HepG2 (cell line): ENCODE measurements at regions of chr6 and their contacts with region 1.

Region 1: DNA sequence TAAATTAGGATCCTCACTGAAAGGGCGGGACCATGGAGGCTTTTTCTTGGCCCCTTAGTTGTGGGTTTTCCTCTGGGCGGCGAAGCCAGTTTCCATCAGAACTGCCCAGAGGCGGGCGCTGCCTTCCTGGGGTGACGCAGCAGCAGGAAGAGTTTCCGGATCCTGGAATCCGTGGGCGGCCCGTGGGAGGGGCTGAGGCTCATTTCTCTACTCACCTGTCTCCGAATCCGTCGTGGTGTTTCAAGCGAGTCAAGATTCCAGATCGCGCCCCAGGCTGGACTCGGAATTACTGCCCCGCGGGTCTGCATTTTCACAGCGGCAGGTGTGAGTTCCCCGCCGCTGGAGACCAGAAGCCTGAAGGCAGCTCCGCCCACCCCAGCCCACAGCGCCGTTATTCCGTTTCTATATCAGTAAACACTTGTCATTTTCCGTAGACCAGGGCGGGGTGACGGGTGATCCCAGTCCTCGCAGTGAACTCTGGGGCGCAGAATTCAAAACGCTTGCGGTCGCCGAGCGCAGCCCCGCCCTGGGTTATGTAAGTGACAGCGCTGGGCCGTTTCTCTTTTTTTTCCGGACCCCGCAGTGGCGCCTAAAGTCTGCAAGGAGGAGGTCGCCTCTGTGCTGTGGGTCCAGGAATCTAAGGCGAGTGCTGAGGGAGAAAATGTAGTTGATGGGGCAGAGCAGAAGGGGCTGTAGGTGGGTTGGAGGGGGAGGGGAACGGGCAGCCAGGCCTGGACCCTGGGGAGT is 27.2 kb upstream of the POU5F1 start:
- DNase-seq: peak; percentile 90
- ATAC-seq: peak; percentile 85
- H3K4me3 ChIP-seq: peak overlapping the region; percentile 95 to 97 (median 96)
- H3K27ac ChIP-seq: peak overlapping the region; percentile 94
- H3K4me1 ChIP-seq: peaks cover 50% of the 10 kb centered on the region
- H3K27me3 ChIP-seq: no peaks in the 10 kb centered on the region; a peak in 1 of 5 replicates
- CTCF ChIP-seq: peak; percentile 40
- EP300 ChIP-seq: no peak
- POLR2A ChIP-seq: peak; percentile 42 to 65
- RAD21 ChIP-seq: no peak

Region 2: DNA sequence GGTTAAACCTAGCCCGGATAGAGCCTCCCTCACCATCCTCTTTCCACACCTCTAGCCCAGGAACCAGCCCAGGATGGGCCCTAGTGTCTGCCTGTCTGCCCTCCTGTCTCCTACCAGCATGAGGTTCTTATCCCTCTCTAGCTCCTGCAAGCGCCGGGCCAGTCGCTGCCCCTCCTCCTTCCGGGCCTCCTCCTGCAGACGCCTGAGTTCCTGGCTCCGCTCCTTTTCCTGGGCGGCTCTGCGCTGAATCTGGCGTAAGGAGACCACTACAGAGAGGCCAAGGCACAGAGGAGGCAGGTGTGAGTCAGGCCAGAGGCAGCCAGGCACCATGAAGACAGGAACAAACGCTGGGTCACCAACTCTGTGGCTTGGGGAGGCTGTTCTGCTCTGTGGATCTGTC is 54.6 kb before region 1 on chr6:
- CTCF ChIA-PET with region 1: interaction called, 110 read pairs
- POLR2A ChIA-PET with region 1: no interaction called
- in situ Hi-C with region 1: loop called (anchors 5 kb)
- intact Hi-C with region 1: no loop called
- DNase-seq: no peak
- ATAC-seq: no peak
- H3K4me3 ChIP-seq: no peak overlapping the region
- H3K27ac ChIP-seq: no peak overlapping the region
- H3K4me1 ChIP-seq: no peaks in the 10 kb centered on the region
- H3K27me3 ChIP-seq: no peaks in the 10 kb centered on the region
- CTCF ChIP-seq: no peak
- EP300 ChIP-seq: no peak
- POLR2A ChIP-seq: no peak
- RAD21 ChIP-seq: no peak

Region 3: DNA sequence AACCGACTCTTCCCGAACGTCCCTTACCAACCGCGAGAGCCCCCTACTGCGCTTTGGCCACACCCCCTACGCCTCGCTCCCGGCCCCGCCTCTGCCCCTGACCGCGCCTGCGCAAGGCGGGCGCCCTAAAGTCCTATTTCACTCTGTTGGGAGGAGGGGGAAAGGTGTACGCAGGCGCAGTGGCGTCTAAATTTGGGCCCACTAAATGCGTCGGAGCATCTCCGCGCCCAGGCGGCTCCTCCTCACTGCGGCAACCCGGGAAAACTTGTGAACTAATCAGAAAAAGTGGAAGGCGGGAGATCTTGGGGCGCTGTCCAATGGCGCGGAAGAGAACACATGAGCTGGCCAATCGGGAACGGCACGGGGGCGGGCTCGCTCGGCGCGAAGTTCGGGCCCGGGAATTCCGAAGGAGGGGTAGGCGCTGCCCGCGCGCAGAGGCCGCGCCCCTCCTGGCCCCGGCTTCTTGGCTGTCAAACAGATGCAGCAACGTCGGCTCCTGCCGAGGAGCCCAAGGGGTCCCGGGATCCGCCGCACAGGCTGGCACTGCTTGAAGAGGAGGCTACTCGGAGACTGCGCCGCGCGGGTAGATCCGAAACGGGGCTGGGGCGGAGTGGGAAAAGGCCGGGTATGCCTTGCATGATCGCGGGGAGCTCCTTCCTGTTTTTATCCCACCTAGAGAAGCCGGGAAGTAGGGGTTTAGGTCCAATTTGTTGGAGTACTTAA is 39.4 kb before region 1 on chr6 and contains the start of gene TCF19:
- CTCF ChIA-PET with region 1: interaction called, 4 read pairs
- POLR2A ChIA-PET with region 1: no interaction called
- in situ Hi-C with region 1: no loop called
- intact Hi-C with region 1: loop called (anchors 2 kb)
- DNase-seq: peak; percentile 99
- ATAC-seq: peak; percentile 94
- H3K4me3 ChIP-seq: peak within 1 kb of the TSS; percentile 76 to 90 (median 87)
- H3K27ac ChIP-seq: peak within 1 kb of the TSS; percentile 66
- H3K4me1 ChIP-seq: peaks cover 30% of the 10 kb centered on the region
- H3K27me3 ChIP-seq: no peaks in the 10 kb centered on the region
- CTCF ChIP-seq: no peak
- EP300 ChIP-seq: no peak
- POLR2A ChIP-seq: peak in 1 of 2 experiments; percentile 58; a peak in 1 of 4 replicates
- RAD21 ChIP-seq: no peak
- total RNA-seq, gene TCF19: 20.5 and 22.2 TPM in 2 replicates

Region 4: DNA sequence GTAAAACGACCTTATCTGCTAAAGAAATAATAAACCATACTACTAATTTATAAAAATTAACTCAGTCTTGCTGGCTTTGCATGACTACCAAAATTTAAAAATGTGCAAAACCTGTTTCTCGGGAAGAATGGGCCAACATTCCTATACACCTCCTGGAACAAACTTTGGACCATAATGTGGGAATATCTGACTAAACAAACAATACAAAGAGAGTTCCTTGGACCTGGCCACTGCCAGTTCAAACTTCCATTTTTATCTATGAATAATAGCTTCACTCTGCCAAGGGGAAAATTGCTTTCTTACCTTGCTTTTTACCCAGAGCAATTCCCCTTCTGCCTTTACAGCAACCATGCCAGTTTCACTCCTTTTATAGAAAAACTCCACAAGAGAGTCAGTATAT is 11.4 kb after region 1 on chr6:
- CTCF ChIA-PET with region 1: no interaction called
- POLR2A ChIA-PET with region 1: interaction called, 17 read pairs
- in situ Hi-C with region 1: no loop called
- intact Hi-C with region 1: no loop called
- DNase-seq: peak; percentile 89
- ATAC-seq: peak; percentile 74
- H3K4me3 ChIP-seq: peak overlapping the region in 2 of 3 experiments; percentile 39 to 41; a peak in 3 of 6 replicates
- H3K27ac ChIP-seq: peak overlapping the region; percentile 80
- H3K4me1 ChIP-seq: peaks cover 61% of the 10 kb centered on the region
- H3K27me3 ChIP-seq: no peaks in the 10 kb centered on the region
- CTCF ChIP-seq: no peak
- EP300 ChIP-seq: peak in 1 of 2 experiments; percentile 49; a peak in 2 of 4 replicates
- POLR2A ChIP-seq: no peak
- RAD21 ChIP-seq: no peak

Region 5: DNA sequence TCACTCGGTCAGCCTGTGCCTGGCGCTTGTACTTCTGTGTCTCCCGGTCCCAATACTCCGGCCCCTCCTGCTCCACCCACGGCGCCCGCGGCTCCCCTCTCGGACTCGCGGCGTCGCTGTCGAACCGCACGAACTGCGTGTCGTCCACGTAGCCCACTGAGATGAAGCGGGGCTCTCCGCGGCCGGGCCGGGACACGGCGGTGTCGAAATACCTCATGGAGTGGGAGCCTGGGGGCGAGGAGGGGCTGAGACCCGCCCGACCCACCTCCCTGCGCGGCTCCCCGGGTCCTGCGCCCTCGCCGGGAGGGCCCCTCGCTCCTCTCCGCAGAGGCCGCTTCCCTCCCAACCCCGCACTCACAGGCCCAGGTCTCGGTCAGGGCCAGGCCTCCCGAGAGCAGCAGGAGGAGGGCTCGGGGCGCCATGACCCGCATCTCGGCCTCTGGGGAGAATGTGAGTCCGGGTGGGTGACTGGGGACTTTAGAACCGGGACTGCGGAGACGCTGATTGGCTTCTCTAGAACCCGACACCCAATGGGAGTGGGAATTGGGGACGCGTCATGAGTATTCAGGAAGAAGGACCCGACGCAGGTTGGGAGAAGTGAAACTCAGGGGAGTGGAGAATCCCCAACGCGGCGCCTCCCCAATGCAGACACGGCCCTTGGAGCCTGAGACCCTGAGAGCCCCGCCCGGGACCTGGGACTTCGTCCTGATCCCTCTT is 74.1 kb after region 1 on chr6 and contains the start of gene HLA-C:
- CTCF ChIA-PET with region 1: no interaction called
- POLR2A ChIA-PET with region 1: no interaction called
- in situ Hi-C with region 1: no loop called
- intact Hi-C with region 1: loop called (anchors 2 kb)
- DNase-seq: peak; percentile 95
- ATAC-seq: peak; percentile 98
- H3K4me3 ChIP-seq: peak within 1 kb of the TSS; percentile 66 to 77 (median 69)
- H3K27ac ChIP-seq: peak within 1 kb of the TSS; percentile 35
- H3K4me1 ChIP-seq: peaks cover 9% of the 10 kb centered on the region
- H3K27me3 ChIP-seq: peaks cover 0 to 7% of the 10 kb centered on the region in 2 experiments; a peak in 3 of 5 replicates
- CTCF ChIP-seq: no peak; the same call in 1 of the 2 replicates
- EP300 ChIP-seq: no peak
- POLR2A ChIP-seq: peak in 1 of 2 experiments; percentile 73; a peak in 2 of 4 replicates
- RAD21 ChIP-seq: no peak
- total RNA-seq, gene HLA-C: 31.5 and 77.1 TPM in 2 replicates

Region 6: DNA sequence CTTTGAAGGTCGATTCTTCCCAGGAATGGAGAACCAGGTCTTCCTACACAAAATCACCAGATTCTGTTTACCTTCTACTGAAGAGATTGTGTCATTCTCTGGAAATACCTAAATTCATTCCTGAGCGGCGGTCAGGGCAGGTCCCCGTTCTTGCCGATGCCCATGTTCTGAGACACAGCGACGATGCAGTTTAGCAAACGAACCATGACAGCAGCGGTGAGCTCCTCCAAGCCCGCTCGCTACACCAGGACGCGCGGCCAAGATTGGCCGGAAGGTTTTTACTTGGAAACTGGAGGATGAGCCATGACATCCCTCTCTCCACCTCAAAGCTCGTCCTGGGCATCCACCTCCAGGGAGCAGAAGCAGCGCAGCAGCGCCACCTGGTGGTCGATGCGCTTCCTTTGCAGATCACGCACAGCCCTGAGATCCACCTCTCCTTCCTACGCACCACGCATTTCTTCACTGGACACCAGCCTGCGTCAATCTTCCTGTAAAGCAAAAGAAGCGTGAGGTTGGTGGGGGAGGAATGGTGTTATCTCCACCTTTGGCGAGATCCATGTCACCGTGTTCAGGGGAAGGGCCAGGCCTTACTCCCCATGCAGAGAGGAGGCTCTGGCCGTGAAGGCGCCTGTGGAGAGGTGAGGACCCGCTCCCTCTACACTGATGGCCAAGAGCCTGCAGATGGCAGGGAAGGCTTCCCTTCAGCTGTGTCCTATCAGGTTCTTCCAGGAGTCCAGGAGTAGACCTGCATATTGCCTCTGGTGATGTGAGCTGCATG is 169.2 kb after region 1 on chr6:
- CTCF ChIA-PET with region 1: interaction called, 67 read pairs
- POLR2A ChIA-PET with region 1: interaction called, 20 read pairs
- in situ Hi-C with region 1: loop called (anchors 5 kb)
- intact Hi-C with region 1: loop called (anchors 1 kb)
- DNase-seq: peak; percentile 80
- ATAC-seq: peak; percentile 100
- H3K4me3 ChIP-seq: peak overlapping the region in 1 of 3 experiments; percentile 47; a peak in 1 of 6 replicates
- H3K27ac ChIP-seq: no peak overlapping the region
- H3K4me1 ChIP-seq: 0 out of 2 replicates have a peak, but pooled peaks cover 9% of the 10 kb centered on the region
- H3K27me3 ChIP-seq: peaks cover 2 to 20% of the 10 kb centered on the region in 2 experiments; a peak in 4 of 5 replicates
- CTCF ChIP-seq: peak; percentile 98
- EP300 ChIP-seq: no peak
- POLR2A ChIP-seq: no peak
- RAD21 ChIP-seq: peak; percentile 99